ENCODE measurements at regions of chr6 and their contacts with region 1.

Region 1: GRCh38 chr6:34383161-34383631 is 9.3 kb downstream of the NUDT3 start:
- DNase-seq: no peak
- ATAC-seq: no peak
- H3K4me3 ChIP-seq: no peak overlapping the region
- H3K27ac ChIP-seq: peak overlapping the region; percentile 71
- H3K4me1 ChIP-seq: peaks cover 55% of the 10 kb centered on the region
- H3K27me3 ChIP-seq: no peaks in the 10 kb centered on the region
- CTCF ChIP-seq: no peak

Region 2: DNA sequence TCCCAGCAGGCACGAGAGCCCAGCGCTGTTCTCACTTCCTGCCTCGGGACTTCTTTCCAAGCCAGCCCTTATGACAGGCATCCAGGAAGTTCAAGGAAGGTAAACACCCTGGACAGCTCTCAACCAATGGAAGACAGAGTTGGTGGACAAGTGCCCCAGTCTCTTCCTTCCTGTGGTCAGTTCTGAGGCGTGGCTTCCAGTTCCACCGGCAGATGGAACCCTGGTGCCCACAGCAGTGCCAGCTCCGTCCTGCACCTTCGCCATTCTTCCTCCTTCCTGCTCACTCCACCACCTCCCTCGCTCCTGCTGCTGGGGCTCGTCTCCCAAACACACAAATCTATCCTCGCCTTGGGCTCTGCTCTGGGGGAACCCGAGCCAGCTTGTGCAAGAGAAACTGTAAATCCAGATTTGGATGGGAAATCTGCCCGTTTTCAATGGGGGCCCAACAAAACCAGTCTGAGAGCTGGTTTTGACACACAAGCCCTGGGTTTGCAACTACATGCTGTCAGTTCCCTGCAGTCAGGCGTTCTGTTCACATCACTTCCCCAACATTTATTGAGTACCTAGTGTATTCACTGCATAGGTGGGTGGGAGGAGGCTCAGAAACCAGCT is 400.0 kb before region 1 on chr6:
- intact Hi-C with region 1: no loop called
- DNase-seq: no peak
- ATAC-seq: peak; percentile 52 to 69 (median 62)
- H3K4me3 ChIP-seq: no peak overlapping the region
- H3K27ac ChIP-seq: no peak overlapping the region
- H3K4me1 ChIP-seq: no peaks in the 10 kb centered on the region
- H3K27me3 ChIP-seq: peaks cover 0 to 5% (median 3%) of the 10 kb centered on the region in 3 donors
- CTCF ChIP-seq: no peak

Region 3: DNA sequence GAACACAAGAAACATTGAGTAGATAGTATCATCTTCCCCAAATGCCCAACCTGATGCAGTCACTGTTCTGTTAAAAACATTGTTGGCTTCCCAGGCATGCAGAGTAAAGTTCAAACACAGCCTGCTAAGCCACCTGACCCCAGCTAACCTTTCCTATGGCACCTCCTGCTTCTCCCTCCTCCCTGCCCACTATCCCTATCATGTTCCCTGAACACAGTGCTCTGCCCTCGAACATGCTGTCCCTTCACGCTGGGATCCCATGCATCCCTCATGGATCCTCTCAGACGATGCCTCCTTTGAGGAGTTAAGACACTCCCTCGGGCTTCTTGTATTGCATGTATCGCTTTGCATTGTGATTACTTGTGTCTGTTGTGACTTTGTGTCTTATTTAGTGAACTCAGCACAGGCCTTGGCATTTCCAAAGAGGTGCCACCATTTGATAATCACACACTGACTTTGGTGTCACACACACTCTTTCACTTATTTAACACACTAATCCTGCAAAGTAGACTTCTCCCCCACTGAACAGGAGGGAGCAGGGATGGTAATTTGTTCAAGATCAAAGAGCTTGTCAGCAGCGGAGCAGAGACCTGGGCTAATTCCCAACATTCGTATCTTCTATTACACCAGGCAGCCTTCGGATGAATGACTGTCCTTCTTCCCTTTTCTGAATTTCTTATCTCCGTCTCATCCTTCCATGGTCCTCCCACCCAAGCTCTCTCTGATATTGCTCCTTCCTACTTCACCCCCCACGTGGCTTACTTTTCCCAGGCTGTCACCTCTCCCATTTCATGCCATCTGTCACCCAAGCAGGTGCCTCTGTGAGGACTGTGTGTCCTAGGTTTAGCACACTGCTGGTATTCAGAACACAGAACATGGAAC is 106.1 kb before region 1 on chr6:
- intact Hi-C with region 1: loop called in 1 of 2 experiments (anchors 5 kb)
- DNase-seq: peak; percentile 43 to 85
- ATAC-seq: peak; percentile 89 to 91 (median 90)
- H3K4me3 ChIP-seq: no peak overlapping the region
- H3K27ac ChIP-seq: peak overlapping the region; percentile 83
- H3K4me1 ChIP-seq: peaks cover 47% of the 10 kb centered on the region
- H3K27me3 ChIP-seq: no peaks in the 10 kb centered on the region
- CTCF ChIP-seq: no peak

Region 4: DNA sequence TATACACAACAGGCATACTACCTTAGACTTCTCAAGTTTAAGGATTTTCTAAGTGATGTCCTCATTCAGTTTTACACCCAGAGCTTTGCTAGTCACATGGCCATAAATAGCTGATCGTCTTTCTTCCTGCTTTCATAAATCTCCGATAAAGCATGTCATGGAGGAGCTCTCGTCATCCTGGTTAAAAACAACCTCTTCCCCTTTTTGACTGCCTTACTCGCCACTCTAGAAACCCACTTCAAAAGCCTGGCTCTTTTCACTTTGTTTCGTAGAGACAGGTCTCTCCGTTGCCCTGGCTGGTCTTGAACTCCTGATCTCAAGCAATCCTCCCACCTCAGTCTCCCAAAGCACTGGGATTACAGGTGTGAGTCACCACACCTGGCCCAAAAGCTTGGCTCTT is 67.4 kb before region 1 on chr6:
- intact Hi-C with region 1: loop called in 1 of 2 experiments (anchors 5 kb)
- DNase-seq: no peak
- ATAC-seq: peak in 3 of 4 donors; percentile 25 to 40 (median 37)
- H3K4me3 ChIP-seq: no peak overlapping the region
- H3K27ac ChIP-seq: peak overlapping the region; percentile 71
- H3K4me1 ChIP-seq: peaks cover 47% of the 10 kb centered on the region
- H3K27me3 ChIP-seq: no peaks in the 10 kb centered on the region
- CTCF ChIP-seq: no peak

Region 5: DNA sequence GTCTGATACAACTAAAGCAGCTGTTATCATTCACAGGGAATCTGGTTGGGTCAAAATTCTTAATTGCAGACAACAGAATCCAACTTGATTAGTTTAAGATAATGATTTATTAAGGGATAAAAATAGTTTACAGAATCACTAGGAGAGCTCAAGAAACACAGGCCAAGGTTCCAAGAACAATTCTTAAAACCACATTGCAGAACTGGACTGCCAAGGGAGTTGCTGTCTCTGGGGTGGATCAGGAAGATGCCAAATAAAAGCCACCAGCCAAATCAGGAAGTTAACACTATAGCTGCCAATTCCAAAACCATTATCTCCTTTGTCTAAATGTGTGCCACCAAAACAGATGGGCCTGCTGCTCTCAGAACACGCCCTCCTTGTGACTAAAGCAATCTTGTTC is 44.4 kb before region 1 on chr6:
- intact Hi-C with region 1: loop called in 1 of 2 experiments (anchors 5 kb)
- DNase-seq: no peak
- ATAC-seq: no peak
- H3K4me3 ChIP-seq: no peak overlapping the region
- H3K27ac ChIP-seq: peak overlapping the region; percentile 79
- H3K4me1 ChIP-seq: peaks cover 72% of the 10 kb centered on the region
- H3K27me3 ChIP-seq: no peaks in the 10 kb centered on the region
- CTCF ChIP-seq: no peak

Measured in psoas muscle (tissue), 8 donors.